Right ventricle myocardium inferior (tissue), 1 donor: ENCODE measurements at regions of chrX and their contacts with region 1.

Region 1: DNA sequence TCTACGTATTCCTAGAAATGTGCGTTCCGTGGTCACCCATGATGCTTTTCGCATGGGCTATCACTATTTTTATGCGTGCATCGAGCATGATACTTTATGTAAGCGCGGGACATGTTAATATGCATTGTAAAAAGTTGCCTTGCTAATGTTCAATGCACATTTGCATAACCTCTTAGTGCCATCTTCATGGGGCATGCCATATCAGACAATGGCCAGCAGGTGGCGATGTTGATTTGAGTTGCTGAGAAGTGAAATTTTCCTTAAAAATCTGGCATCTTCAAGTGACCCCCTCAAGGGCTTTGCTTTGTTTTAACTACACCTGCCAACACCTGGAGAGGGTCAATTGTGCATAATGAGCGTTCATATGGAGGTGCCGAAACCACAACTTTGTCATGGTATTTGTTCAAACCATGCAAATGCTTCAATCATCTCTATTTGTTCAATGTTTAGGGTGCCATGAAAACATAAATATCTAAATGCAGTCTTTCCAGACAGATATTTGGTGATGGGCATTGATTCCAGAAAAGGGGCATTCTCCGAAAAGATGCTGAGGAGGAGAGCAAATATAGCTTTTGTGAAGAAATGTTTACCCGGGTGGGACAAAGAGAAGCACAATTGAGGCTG is 833.9 kb upstream of the PRKX start:
- DNase-seq: no peak
- ATAC-seq: no peak

Region 2: GRCh38 chrX:5084279-5084678 is 537.0 kb after region 1 on chrX:
- intact Hi-C with region 1: no loop called
- DNase-seq: no peak
- ATAC-seq: no peak

Region 3: GRCh38 chrX:5113128-5113527 is 565.8 kb after region 1 on chrX:
- intact Hi-C with region 1: loop called (anchors 5 kb)
- DNase-seq: no peak
- ATAC-seq: no peak